ENCODE measurements at regions of chr5 and their contacts with region 1.

Region 1: DNA sequence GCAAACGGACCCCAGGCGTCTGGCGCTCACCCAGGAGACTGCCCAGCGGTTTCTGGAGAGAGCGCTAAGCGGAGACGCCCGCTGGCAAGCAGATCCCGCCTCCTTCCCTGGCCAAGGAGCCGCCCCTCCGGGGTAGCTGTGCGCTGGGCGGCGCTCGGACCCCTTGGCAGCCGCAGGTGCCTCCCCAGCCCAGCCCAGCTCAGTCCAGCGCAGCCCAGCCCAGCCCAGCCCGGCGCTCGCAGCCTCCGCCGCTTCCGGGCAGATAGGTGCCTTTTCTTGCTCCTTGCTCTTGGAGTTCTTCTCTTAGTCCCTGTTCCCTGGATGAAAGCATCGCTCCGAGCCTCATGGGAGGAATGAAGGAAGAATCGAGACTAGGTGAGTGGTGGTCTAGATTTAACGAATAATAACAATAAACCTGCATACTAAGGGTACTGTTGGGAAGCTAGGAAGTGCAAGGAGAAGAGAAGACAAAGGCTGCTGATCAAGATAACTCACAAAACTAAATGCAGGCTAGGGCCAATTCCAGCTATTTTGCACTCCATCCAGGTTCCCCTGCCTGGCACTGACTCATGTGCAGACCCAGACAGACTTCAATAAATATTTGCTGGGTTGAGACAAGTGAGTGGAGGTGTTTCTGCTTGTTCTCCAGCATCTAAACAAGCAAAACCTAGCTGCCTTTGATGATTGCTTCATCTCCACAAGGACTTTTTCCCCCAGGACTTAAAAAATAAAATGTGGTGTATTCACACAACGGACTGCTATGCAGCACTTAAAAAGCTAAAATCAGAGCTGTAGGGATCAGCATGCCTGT is at the start of gene STK32A:
- DNase-seq: peak; percentile 92
- ATAC-seq: peak; percentile 99
- H3K4me3 ChIP-seq: peak within 1 kb of the TSS; percentile 56
- H3K27ac ChIP-seq: peak within 1 kb of the TSS; percentile 9
- H3K4me1 ChIP-seq: no peaks in the 10 kb centered on the region
- H3K27me3 ChIP-seq: peaks cover 17% of the 10 kb centered on the region
- CTCF ChIP-seq: no peak
- total RNA-seq, gene STK32A: 10.2 TPM

Region 2: DNA sequence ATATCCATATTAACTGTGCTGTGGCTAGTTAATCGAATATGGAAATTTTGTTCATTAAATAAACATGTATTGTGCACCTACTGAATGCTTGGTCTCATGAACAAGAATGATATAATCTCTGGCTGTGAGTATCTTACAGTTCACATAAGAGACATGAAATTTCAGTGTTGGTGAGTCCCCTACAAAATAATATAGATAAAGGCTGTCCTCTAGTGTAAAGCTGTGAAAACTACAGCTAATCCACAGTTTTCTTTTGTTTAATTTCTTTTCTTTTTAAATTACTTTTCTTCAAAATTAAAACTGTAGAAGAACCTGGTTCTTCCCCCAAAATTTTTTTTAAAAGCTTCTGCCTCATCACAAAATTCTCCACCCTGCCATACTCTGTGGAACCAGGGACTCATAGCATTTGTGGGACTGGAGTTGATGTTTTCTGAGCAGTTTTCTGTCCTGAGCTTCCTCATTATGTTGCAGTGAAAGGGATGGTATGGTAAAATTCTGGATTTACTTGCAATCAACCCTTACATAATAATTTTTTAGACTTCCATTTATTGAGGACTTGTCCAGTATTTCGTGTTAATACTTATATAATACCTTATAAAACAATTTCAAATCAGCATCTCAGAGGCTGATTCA is 134.8 kb after region 1 on chr5:
- intact Hi-C with region 1: loop called (anchors 10 kb)
- DNase-seq: no peak
- ATAC-seq: peak; percentile 54
- H3K4me3 ChIP-seq: no peak overlapping the region
- H3K27ac ChIP-seq: no peak overlapping the region
- H3K4me1 ChIP-seq: no peaks in the 10 kb centered on the region
- H3K27me3 ChIP-seq: no peaks in the 10 kb centered on the region
- CTCF ChIP-seq: peak; percentile 63

Measured in upper lobe of right lung (tissue), 1 donor.